ENCODE measurements at regions of chr7 and their contacts with region 1.

Region 1: GRCh38 chr7:55065079-55065478 is 46.3 kb downstream of the EGFR start:
- DNase-seq: peak; percentile 64
- H3K4me3 Mint-ChIP-seq: peak overlapping the region; percentile 24
- H3K27ac Mint-ChIP-seq: peak overlapping the region; percentile 38
- H3K4me1 Mint-ChIP-seq: peaks cover 65% of the 10 kb centered on the region
- H3K27me3 Mint-ChIP-seq: no peaks in the 10 kb centered on the region
- CTCF ChIP-seq: no peak

Region 2: DNA sequence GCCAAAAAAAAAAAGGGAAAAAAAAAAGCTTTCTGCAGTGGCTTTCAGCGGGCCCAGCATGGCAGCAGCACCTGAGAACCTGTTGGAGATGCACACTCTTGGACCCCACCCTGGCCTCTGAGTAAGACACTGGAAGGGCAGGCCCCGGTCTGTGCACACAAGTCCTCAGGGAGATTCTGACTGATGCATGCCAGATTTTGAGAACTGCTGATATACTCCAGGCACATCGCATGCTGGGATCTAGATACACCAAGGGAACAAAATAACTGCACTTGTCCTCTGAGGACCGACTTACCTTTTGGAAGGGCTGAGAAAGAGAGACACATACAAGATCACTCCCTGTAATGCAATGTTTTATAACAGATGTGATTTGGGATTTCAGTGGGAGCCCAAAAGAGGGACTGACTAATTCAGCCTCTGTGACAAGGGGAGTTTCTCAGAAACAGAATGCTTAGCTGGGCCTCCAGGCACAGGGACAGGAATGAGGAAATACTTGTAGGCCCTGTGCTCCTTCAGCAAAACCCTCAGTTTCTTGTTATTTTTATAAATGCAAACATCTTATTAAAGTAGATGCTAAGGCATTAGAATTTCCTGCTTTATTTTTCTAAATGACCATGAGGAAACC is 38.1 kb before region 1 on chr7:
- CTCF ChIA-PET with region 1: no interaction called
- intact Hi-C with region 1: loop called (anchors 5 kb)
- DNase-seq: peak; percentile 42
- H3K4me3 Mint-ChIP-seq: no peak overlapping the region
- H3K27ac Mint-ChIP-seq: peak overlapping the region; percentile 80
- H3K4me1 Mint-ChIP-seq: peaks cover 84% of the 10 kb centered on the region
- H3K27me3 Mint-ChIP-seq: no peaks in the 10 kb centered on the region
- CTCF ChIP-seq: no peak

Region 3: DNA sequence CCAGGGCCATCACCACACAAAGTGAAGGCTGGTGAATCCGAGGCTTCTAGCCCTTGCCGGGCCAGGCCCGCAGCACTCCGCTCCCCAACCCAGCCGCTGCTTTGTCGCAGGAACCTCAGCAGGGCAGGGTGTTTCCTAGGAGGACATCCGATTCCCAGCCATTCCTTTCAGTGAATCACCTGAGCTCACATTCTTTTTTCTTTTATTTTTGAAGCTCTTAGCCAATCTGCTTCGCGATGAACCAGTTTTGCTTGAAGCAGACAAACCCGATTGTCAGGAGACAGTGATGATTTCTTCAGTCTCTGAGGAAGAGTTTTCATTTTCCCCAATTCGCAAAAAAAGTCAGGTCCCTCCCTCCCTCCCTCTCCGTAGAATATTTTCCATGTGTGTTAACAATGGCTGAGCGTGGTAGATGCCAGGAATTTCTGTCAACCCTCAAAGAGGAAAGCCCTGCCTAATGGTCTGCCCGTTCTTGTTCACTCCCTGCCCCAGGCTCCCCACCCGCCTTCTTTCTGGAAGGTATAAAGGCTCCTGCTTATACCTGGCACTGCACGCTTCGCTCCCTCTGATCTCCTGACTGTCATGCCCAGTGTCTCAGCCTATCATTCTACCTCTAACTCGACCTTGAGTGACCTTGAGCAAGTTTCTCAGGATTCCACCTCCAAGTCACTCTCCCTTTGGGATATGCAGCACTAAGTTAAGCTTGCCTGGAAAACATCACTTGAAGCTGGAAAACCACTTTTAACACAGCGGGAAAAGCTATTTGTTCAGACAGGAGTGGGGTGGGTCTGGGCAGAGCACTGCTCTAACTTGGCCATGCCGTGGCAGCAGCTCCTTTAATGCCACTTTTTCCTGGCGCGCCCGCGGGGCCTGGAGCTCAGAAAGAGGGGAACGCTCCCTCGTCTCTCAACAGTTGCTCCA is 11.2 kb before region 1 on chr7:
- CTCF ChIA-PET with region 1: interaction called, 11 read pairs
- intact Hi-C with region 1: no loop called
- DNase-seq: no peak
- H3K4me3 Mint-ChIP-seq: no peak overlapping the region
- H3K27ac Mint-ChIP-seq: no peak overlapping the region
- H3K4me1 Mint-ChIP-seq: peaks cover 49% of the 10 kb centered on the region
- H3K27me3 Mint-ChIP-seq: no peaks in the 10 kb centered on the region
- CTCF ChIP-seq: no peak

Region 4: GRCh38 chr7:55140221-55140940 is 75.3 kb after region 1 on chr7:
- CTCF ChIA-PET with region 1: no interaction called
- intact Hi-C with region 1: no loop called
- DNase-seq: no peak
- H3K4me3 Mint-ChIP-seq: no peak overlapping the region
- H3K27ac Mint-ChIP-seq: no peak overlapping the region
- H3K4me1 Mint-ChIP-seq: peaks cover 61% of the 10 kb centered on the region
- H3K27me3 Mint-ChIP-seq: no peaks in the 10 kb centered on the region
- CTCF ChIP-seq: no peak

Region 5: GRCh38 chr7:55247427-55247826 is 182.3 kb after region 1 on chr7:
- CTCF ChIA-PET with region 1: no interaction called
- intact Hi-C with region 1: loop called (anchors 1 kb)
- DNase-seq: no peak
- H3K4me3 Mint-ChIP-seq: no peak overlapping the region
- H3K27ac Mint-ChIP-seq: no peak overlapping the region
- H3K4me1 Mint-ChIP-seq: peaks cover 14% of the 10 kb centered on the region
- H3K27me3 Mint-ChIP-seq: peaks cover 16% of the 10 kb centered on the region
- CTCF ChIP-seq: no peak

Measured in Calu3 (cell line).